Activated CD4-positive, alpha-beta memory T cell treated with anti-CD3 and anti-CD28 coated beads, Interleukin-2, amount 10 ng/mL, durations not matched to agents 7 days and 5 days (primary cell): ENCODE measurements at regions of chr3 and their contacts with region 1.

Region 1: DNA sequence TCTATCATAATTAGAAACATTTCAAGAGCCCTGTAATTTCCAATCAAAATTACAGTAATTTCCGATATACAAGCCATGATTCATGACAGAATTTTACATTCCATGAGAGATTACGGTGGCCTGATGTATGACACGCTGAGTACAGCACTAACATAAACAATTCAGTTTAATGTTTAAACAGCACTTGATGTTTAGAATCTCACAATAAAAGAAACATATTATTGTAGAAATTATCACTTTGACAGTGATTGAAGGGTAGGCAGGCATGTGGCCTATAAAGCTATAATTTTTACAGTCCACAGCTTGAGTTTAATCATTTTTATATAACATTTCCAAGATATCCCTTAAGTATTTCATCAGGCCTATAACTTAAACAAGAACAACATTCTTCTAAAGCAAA is 48.5 kb downstream of the SATB1 start:
- DNase-seq: no peak
- H3K4me3 Mint-ChIP-seq: no peak overlapping the region
- H3K27ac Mint-ChIP-seq: no peak overlapping the region
- H3K4me1 Mint-ChIP-seq: peaks cover 56% of the 10 kb centered on the region
- H3K27me3 Mint-ChIP-seq: no peaks in the 10 kb centered on the region

Region 2: GRCh38 chr3:18389108-18389733 is 12.5 kb after region 1 on chr3:
- CTCF ChIA-PET with region 1: interaction called, 14 read pairs
- POLR2A ChIA-PET with region 1: interaction called, 4 read pairs
- DNase-seq: no peak
- H3K4me3 Mint-ChIP-seq: no peak overlapping the region
- H3K27ac Mint-ChIP-seq: no peak overlapping the region
- H3K4me1 Mint-ChIP-seq: peaks cover 46% of the 10 kb centered on the region
- H3K27me3 Mint-ChIP-seq: no peaks in the 10 kb centered on the region

Region 3: DNA sequence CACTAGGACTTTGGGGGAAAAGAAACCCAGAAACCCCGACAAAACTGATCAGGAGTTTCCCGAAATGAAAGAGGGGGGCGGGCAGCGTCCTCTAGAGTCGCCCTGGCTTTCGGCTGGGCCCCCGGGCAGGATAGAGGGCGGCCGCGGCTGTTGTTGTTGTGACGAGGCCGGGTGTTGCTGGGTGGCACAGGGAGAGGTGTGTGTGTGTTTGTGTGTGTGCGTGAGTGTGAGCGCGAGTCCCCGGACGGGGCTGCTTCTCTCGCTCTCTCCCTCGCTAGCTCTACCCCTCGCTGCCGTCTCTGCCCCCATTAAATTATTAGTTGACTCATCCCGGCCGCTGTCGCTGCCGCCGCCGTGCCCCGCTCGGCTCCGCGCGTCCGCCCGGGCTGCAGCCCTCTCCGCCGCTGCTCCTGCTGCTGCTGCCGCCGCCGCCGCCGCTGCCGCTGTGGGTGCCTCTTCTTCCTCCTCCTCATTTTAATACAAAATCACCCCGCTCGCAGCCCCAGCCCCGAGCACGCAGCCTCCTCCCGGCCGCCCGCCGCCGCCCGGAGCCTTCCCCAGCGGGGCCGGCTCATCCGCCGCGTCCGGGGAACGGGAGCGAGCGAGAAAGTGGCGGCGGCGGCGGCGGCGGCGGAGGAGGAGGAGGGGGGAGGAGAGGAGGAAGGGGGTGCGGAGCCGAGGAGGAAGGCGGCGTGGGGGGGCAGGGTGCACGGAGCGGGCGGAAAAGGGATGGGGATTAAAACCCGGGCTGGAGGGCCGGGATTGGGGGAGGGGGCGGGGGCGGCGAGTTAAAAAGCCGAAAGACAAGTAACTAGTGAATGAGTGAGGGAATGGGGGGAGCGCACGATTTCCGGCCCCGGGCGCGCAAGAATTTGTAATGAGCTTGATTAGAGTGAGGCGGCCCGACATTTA is 48.3 kb after region 1 on chr3 and contains the start of gene SATB1:
- CTCF ChIA-PET with region 1: no interaction called
- POLR2A ChIA-PET with region 1: no interaction called
- DNase-seq: peak; percentile 71
- H3K4me3 Mint-ChIP-seq: peak within 1 kb of the TSS; percentile 81
- H3K27ac Mint-ChIP-seq: peak within 1 kb of the TSS; percentile 79
- H3K4me1 Mint-ChIP-seq: peaks cover 67% of the 10 kb centered on the region
- H3K27me3 Mint-ChIP-seq: no peaks in the 10 kb centered on the region
- total RNA-seq, gene SATB1: 263 to 267 TPM